Activated CD4-positive, alpha-beta memory T cell treated with anti-CD3 and anti-CD28 coated beads, Interleukin-2, amount 10 ng/mL, durations not matched to agents 7 days and 5 days (primary cell): ENCODE measurements at regions of chr15 and their contacts with region 1.

Region 1: DNA sequence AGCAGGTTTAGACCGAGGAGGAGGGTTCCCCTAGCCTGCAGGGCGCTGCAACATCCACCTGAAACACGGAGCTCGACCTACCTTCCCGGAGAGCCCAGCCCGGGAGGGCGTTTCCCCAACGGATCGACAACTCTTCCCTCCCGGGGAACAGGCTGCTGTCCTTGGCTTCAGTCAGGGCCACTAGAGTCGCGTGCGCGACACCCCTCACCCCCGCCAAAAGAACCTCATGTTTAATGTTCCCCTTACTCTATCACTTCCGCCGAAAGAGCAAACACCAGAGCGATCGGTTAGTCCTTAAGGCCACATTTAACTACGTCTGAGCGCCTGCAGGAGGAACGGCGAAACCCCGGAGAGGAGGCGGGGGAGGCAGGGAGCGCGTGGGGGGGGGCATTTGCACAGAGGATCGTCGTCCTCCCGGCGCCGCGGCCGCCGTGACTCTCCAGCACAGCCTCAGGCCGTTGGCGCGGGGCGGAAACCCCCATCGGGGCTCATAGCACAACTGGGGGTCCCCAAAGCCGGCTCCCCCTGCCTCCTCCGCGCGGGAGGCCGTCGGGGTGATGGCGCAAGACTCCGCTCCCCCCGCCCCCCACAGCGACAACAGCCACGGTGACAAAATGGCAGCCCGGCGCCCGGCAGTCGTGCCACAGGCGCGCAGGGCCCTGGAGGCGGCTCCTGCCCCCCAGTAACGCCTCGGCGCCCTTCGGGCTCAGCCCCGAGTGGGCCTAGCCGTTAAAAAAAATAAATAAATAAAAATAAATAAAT is 3.2 kb downstream of the ANP32A start:
- DNase-seq: peak; percentile 72
- H3K4me3 Mint-ChIP-seq: peak overlapping the region; percentile 91
- H3K27ac Mint-ChIP-seq: peak overlapping the region; percentile 97
- H3K4me1 Mint-ChIP-seq: peaks cover 49% of the 10 kb centered on the region
- H3K27me3 Mint-ChIP-seq: no peaks in the 10 kb centered on the region

Region 2: DNA sequence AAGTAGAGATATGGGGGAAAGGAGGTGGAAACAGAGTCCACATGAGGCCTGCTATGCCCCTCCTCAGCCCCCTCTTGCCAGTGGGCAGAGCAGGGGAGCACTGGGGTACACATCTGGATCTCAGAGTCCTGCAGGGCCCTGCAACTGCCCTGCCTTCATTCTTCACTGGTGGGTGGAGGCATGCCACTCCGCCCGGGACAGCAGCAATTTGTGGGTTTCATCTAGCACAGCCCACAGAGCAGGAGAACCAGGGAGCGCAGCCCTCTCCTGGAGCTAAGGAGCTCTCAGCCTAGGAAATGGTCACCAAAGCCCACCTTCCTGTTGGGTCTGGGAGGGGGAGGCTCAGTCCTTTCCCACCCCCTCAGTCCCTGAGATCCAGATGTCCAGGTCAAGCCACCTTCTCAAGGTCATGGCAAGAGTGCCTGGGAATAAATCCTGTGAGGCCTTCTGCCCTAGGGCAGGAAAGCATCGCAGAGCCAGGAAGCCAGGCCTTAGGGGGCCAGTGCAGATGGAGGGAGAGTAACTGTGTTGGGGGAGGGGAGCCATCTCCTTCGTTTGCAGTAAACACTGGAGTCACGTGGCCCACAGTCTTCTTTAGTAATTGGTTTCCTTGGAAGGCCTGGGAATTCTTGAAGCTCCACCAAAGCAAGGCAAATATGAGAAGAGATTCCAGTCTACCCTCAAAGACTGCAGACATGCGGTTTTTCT is 27.8 kb before region 1 on chr15:
- CTCF ChIA-PET with region 1: interaction called, 10 read pairs
- POLR2A ChIA-PET with region 1: interaction called, 97 read pairs
- DNase-seq: no peak
- H3K4me3 Mint-ChIP-seq: no peak overlapping the region
- H3K27ac Mint-ChIP-seq: peak overlapping the region; percentile 35
- H3K4me1 Mint-ChIP-seq: peaks cover 64% of the 10 kb centered on the region
- H3K27me3 Mint-ChIP-seq: no peaks in the 10 kb centered on the region

Region 3: GRCh38 chr15:68795298-68795848 is 22.1 kb before region 1 on chr15:
- CTCF ChIA-PET with region 1: interaction called, 10 read pairs
- POLR2A ChIA-PET with region 1: interaction called, 97 read pairs
- DNase-seq: peak; percentile 74
- H3K4me3 Mint-ChIP-seq: peak overlapping the region; percentile 14
- H3K27ac Mint-ChIP-seq: peak overlapping the region; percentile 53
- H3K4me1 Mint-ChIP-seq: peaks cover 93% of the 10 kb centered on the region
- H3K27me3 Mint-ChIP-seq: no peaks in the 10 kb centered on the region

Region 4: DNA sequence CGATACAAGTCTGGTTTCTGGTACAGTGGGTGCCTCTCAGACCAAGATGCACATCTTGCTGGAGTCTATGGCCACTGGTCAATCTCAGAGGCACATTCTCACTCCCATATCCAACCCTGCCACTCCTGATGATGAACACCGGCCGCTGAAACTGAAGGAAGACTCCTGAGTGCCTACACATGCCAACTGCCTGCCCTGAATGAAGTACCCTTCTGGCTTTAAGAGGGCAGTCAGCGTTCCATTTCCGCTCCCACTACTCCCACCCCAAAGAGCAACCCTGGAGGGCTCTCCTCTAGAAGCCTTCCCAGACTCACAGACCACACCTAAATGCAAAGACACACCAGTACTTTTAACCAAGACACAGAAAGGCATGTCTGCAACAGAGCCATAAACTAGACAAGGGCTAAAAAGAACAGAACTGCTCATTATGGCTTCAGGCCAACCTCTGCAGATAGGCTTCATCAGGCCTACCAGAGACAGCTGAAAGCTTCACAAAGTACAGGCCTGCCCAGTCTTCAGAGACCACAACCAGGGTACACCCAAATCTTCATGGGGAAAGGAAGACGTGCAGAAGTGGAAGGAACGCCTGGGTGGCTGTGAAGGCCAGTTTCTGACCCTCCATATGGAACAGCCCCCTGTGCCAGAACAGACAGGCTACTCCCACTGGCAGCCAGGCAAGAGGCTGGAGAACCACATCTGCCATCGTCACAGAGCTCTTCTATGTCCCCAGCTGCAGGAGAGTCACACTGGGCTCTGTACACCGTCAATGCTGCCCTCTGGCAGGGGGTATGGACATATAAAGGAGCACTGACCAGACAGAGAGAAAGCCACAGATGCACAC is 11.0 kb before region 1 on chr15:
- CTCF ChIA-PET with region 1: no interaction called
- POLR2A ChIA-PET with region 1: interaction called, 14 read pairs
- DNase-seq: no peak
- H3K4me3 Mint-ChIP-seq: no peak overlapping the region
- H3K27ac Mint-ChIP-seq: no peak overlapping the region
- H3K4me1 Mint-ChIP-seq: peaks cover 51% of the 10 kb centered on the region
- H3K27me3 Mint-ChIP-seq: no peaks in the 10 kb centered on the region

Region 5: GRCh38 chr15:68829068-68829467 is 11.6 kb after region 1 on chr15:
- CTCF ChIA-PET with region 1: interaction called, 10 read pairs
- POLR2A ChIA-PET with region 1: interaction called, 5 read pairs
- DNase-seq: no peak
- H3K4me3 Mint-ChIP-seq: no peak overlapping the region
- H3K27ac Mint-ChIP-seq: no peak overlapping the region
- H3K4me1 Mint-ChIP-seq: peaks cover 15% of the 10 kb centered on the region
- H3K27me3 Mint-ChIP-seq: peaks cover 22% of the 10 kb centered on the region